ENCODE measurements at regions of chr22 and their contacts with region 1.

Region 1: GRCh38 chr22:38201710-38202436 is at the start of gene MAFF:
- DNase-seq: peak; percentile 95 to 98
- H3K4me3 ChIP-seq: peak within 1 kb of the TSS; percentile 66 to 96
- H3K27ac ChIP-seq: peak within 1 kb of the TSS; percentile 96 to 100
- H3K4me1 ChIP-seq: peaks cover 8 to 37% (median 30%) of the 10 kb centered on the region in 4 donors
- H3K27me3 ChIP-seq: no peaks in the 10 kb centered on the region
- CTCF ChIP-seq: no peak

Region 2: DNA sequence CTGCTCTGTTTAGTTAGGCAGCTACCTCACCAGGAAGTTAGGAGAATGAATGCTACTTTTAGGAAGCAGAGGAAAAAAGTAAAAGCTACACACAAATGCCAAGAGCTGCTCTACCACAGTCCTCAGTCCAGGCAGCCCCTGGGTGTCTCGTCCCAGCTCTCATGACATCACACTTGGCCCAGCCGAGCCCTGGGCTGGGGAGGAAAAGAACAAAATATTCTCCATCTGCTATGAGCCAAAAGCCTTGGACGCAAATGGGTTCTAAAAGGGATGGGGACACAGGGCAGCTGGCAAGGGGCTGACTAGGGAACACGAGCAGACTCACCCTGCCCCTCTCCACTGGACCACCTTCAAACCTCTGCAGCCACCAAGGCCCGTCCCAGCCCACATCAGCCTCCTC is 44.8 kb after region 1 on chr22:
- intact Hi-C with region 1: loop called (anchors 5 kb)
- DNase-seq: peak; percentile 84 to 95
- H3K4me3 ChIP-seq: no peak overlapping the region
- H3K27ac ChIP-seq: peak overlapping the region; percentile 78 to 83
- H3K4me1 ChIP-seq: peaks cover 6 to 86% (median 67%) of the 10 kb centered on the region in 4 donors
- H3K27me3 ChIP-seq: no peaks in the 10 kb centered on the region
- CTCF ChIP-seq: no peak

Region 3: DNA sequence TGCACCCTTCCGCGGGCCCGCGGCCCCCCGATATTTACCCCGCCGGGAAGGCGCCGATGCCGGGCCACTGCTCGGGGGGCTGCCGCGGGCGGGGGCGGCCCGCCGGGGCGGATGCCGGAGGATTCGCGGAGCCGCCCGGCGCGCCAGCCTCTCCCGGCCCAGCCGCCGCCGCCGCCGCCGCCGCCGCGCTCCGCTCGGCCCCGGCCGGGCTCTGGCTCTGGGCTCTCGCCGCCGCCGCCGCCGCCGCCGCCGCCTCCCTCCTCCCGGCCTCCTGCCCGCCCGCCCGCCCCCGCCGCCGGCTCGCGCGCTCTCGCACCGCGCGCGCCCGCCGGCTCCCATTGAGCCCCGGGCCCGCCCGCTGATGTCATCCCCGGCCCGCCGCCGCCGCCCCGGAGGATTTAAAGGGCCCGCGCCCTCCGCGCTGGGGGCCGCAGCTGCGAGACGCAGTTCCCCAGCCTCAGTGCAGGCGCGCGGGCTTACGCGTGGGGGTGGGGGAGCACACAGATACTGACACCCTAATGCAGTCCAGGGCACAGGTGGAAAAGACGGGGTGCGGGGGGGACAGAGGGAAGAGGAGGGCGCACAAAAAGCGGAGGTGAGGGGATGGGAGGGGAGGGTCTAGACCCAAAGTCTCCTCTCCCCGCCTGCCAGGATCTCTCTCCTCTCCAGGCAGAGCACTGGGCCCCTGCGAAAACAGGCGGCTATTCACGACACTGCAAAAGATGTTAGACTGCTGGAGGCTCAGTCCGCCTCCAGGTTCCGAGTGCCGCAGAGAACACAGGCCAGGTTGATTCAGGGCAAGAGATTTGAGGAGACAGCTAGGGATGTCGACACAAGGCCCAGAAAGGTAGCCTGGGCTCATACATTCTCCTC is 115.5 kb after region 1 on chr22 and contains the start of gene CSNK1E:
- intact Hi-C with region 1: loop called (anchors 10 kb)
- DNase-seq: peak; percentile 83 to 92
- H3K4me3 ChIP-seq: peak within 1 kb of the TSS; percentile 91 to 94
- H3K27ac ChIP-seq: peak within 1 kb of the TSS; percentile 98 to 100
- H3K4me1 ChIP-seq: peaks cover 8 to 52% (median 45%) of the 10 kb centered on the region in 4 donors
- H3K27me3 ChIP-seq: no peaks in the 10 kb centered on the region
- CTCF ChIP-seq: no peak